ENCODE measurements at regions of chr22 and their contacts with region 1.

Region 1: GRCh38 chr22:46006379-46007002 is 29.5 kb upstream of the WNT7B start:
- DNase-seq: peak; percentile 56 to 98
- H3K4me3 ChIP-seq: no peak overlapping the region
- H3K27ac ChIP-seq: no peak overlapping the region
- H3K4me1 ChIP-seq: no peaks in the 10 kb centered on the region; a peak in 1 of 7 replicates
- H3K27me3 ChIP-seq: no peaks in the 10 kb centered on the region
- CTCF ChIP-seq: peak; percentile 83 to 94 (median 93)
- EP300 ChIP-seq: no peak
- POLR2A ChIP-seq: no peak
- RAD21 ChIP-seq: peak; percentile 84 to 86

Region 2: DNA sequence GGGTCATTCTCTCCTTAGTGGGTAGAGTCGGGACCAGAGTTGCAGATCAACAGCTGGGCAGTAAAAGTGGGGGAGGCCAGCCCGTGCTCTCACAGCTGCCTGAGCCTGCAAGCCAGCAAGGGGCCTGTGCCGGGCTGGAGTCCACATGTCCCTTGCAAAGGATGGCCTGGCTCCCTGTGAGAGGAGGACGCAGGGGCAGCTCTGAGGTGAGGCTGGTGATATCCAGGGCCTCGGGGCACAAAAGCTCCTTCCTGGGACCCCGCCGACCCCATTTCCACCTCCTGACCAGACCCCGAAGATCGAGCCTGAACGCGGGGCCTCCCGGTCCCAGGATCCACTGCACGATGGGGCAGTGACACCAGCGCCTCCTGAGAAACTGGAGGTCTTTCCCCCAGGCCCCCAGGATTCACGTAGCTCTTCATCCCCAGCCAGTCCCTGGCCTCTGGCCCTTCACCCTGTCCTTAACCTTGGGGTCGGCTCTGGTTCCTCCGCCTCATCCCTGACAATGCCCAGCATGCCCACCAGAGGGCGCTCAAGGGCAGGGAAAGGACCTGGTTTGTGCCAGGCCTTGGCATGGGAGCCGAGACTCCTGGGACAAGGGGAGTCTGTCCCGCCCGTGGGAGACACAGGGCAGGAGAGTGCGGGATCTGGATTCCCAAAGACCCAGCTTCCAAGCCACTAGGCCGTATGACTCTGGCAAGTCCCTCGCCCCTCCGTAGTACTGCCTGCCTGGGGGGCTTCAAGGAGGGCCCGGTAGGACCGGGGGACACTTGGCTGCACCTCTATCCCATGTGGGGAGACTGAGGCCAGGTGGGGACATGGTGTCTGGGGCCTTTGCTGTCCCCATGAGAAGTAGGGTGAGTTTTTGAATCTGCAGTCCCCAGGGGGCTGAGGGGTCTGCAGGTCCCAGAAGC is 11.7 kb before region 1 on chr22:
- CTCF ChIA-PET with region 1: interaction called, 90 read pairs
- POLR2A ChIA-PET with region 1: interaction called, 3 read pairs
- DNase-seq: peak in 1 of 2 experiments; percentile 100
- H3K4me3 ChIP-seq: no peak overlapping the region
- H3K27ac ChIP-seq: no peak overlapping the region
- H3K4me1 ChIP-seq: peaks cover 0 to 3% (median 0%) of the 10 kb centered on the region in 4 experiments; a peak in 2 of 7 replicates
- H3K27me3 ChIP-seq: no peaks in the 10 kb centered on the region; a peak in 2 of 7 replicates
- CTCF ChIP-seq: peak; percentile 94 to 98 (median 97)
- EP300 ChIP-seq: no peak
- POLR2A ChIP-seq: no peak
- RAD21 ChIP-seq: peak; percentile 98 to 99

Region 3: DNA sequence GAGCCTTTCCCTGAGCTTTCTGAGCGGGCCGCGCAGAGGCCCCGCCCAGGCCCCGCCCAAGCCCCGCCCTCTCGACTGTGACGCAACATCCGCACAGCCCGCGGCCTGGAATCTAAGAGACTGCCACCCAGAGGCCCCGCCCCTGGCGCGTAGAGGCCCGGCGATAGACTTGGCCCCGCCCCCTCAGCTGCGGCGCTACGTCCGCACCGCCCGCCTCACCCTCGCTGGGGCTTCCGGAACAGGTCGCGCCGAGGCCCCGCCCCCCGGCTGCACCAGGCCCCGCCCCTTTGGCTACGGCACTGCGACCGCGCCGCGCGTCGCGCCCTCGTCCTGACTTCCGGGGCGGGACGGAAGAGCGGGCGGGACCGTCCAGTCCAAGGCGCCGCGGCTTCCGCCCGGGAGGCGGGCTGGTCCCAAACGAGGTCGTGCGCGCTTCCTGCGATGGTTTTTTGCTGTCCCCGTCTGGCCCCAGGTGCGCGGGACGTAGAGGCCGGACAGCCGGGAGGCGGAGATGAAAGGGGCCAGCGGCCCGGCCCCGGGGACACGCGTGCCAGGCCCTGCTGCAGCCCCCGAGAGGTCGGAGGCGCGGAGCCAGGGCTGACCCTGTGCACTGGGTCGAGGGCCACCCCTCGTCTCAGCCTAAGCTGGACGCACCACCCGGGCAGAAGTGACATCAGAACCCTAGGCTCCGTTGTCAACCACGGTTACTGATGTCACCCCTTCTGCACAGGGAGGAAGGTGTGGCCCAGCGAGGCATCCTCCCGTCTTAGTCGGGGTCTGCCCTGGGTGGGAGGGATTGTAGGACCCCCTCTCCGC is 29.5 kb after region 1 on chr22:
- CTCF ChIA-PET with region 1: interaction called, 46 read pairs
- POLR2A ChIA-PET with region 1: no interaction called
- DNase-seq: peak; percentile 97 to 100
- H3K4me3 ChIP-seq: peak overlapping the region; percentile 72 to 86 (median 79)
- H3K27ac ChIP-seq: 0 out of 2 replicates have a peak overlapping the region, but pooled peaks have one; percentile 31
- H3K4me1 ChIP-seq: peaks cover 0 to 23% (median 11%) of the 10 kb centered on the region in 4 experiments; a peak in 6 of 7 replicates
- H3K27me3 ChIP-seq: no peaks in the 10 kb centered on the region
- CTCF ChIP-seq: no peak
- EP300 ChIP-seq: no peak
- POLR2A ChIP-seq: peak in 1 of 2 experiments; percentile 64; a peak in 1 of 3 replicates
- RAD21 ChIP-seq: no peak

Region 4: DNA sequence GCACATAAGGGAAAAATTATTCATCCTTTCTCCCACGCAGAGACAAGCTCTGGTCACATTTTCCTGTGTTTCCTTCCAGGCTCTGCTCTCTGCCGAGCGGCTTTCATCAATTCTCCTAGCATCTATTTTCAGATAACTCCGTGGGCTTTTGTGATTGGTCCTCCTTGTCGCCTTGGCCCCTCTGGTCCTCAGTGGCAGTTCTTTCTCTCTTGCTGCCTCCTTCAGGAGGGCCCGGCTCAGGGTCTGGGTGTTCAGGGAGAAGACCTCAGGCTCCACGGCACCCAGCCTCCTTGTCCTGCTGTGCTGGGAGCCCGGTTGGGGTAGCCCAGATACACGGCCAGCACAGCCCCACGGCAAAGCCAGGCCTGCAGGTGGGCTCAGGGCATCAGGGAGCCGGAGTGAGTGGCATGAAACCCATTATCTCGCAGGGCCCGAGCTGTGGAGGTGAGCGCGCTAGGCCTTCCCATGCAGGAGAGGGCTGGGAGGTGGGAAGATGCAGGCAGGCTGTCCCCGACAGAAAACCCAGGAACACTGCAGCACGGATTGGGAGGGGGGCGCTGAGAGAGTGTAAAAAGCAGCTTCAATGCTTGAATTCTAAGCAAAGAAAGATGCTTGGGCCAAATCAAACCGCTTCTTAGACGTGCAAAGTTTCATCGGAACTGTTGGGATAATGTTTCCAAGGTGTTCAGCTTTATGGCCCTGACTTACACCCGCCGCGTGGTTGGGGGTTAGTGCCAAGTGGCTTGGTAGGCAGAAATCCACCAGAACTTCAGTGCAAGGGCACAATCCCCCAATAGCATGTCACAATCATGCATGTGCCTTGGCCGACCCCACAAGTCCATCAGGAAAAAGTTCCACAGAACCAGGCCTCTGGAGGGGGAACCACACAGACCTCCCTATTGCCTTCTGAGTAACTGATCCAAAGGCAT is 52.4 kb after region 1 on chr22:
- CTCF ChIA-PET with region 1: interaction called, 15 read pairs
- POLR2A ChIA-PET with region 1: interaction called, 3 read pairs
- DNase-seq: no peak
- H3K4me3 ChIP-seq: no peak overlapping the region
- H3K27ac ChIP-seq: no peak overlapping the region
- H3K4me1 ChIP-seq: peaks cover 0 to 6% (median 3%) of the 10 kb centered on the region in 4 experiments; a peak in 2 of 7 replicates
- H3K27me3 ChIP-seq: peaks cover 3 to 52% (median 33%) of the 10 kb centered on the region in 4 experiments
- CTCF ChIP-seq: no peak
- EP300 ChIP-seq: no peak
- POLR2A ChIP-seq: no peak
- RAD21 ChIP-seq: no peak

Region 5: GRCh38 chr22:46088541-46089311 is 82.2 kb after region 1 on chr22:
- CTCF ChIA-PET with region 1: interaction called, 10 read pairs
- POLR2A ChIA-PET with region 1: no interaction called
- DNase-seq: no peak
- H3K4me3 ChIP-seq: no peak overlapping the region
- H3K27ac ChIP-seq: no peak overlapping the region
- H3K4me1 ChIP-seq: no peaks in the 10 kb centered on the region; a peak in 1 of 7 replicates
- H3K27me3 ChIP-seq: no peaks in the 10 kb centered on the region
- CTCF ChIP-seq: no peak
- EP300 ChIP-seq: no peak
- POLR2A ChIP-seq: no peak
- RAD21 ChIP-seq: no peak

Region 6: GRCh38 chr22:46131151-46131587 is 124.7 kb after region 1 on chr22:
- CTCF ChIA-PET with region 1: interaction called, 12 read pairs
- POLR2A ChIA-PET with region 1: no interaction called
- DNase-seq: peak; percentile 50 to 91
- H3K4me3 ChIP-seq: no peak overlapping the region
- H3K27ac ChIP-seq: no peak overlapping the region
- H3K4me1 ChIP-seq: no peaks in the 10 kb centered on the region
- H3K27me3 ChIP-seq: no peaks in the 10 kb centered on the region
- CTCF ChIP-seq: peak; percentile 91 to 98 (median 98)
- EP300 ChIP-seq: no peak
- POLR2A ChIP-seq: no peak
- RAD21 ChIP-seq: peak; percentile 69 to 76

Region 7: DNA sequence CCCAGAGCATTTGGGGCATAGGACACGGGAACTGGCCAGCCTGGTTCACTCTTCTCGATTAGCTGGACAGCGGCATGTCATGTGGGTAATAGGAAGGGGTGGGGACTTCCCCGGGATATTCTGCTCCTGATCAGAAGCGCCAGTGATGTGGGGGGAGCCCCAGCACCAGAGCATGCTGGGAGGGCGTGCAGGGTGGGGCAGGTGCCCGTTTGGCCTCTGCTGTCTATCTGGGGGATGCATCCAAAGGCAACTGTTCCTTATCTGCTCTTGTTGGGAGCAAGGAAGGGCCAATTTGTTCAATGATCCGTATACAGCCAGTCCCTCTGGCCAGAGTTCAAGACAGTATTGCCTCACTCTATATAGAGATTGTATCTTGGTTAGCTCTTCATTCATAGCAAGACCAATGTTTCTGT is 187.4 kb after region 1 on chr22:
- CTCF ChIA-PET with region 1: no interaction called
- POLR2A ChIA-PET with region 1: no interaction called
- DNase-seq: no peak
- H3K4me3 ChIP-seq: no peak overlapping the region
- H3K27ac ChIP-seq: no peak overlapping the region
- H3K4me1 ChIP-seq: no peaks in the 10 kb centered on the region
- H3K27me3 ChIP-seq: no peaks in the 10 kb centered on the region
- CTCF ChIP-seq: no peak
- EP300 ChIP-seq: no peak
- POLR2A ChIP-seq: no peak
- RAD21 ChIP-seq: no peak

Measured in H1 (cell line).